Activated T-helper 2 cell treated with anti-CD3 and anti-CD28 coated beads, Interferon-gamma antibody, Interleukin-2, Interleukin-4, amounts not matched to agents 10 μg/mL and 5 μg/mL and 100 μg/mL, durations not matched to agents 14 hours and 24 hours and 36 hours (primary cell): ENCODE measurements at regions of chr2 and their contacts with region 1.

Region 1: GRCh38 chr2:191150600-191151330 is at the start of gene STAT4:
- DNase-seq: peak; percentile 76
- H3K4me3 Mint-ChIP-seq: peak within 1 kb of the TSS; percentile 95
- H3K27ac Mint-ChIP-seq: peak within 1 kb of the TSS; percentile 96
- H3K4me1 Mint-ChIP-seq: peaks cover 71% of the 10 kb centered on the region
- H3K27me3 Mint-ChIP-seq: no peaks in the 10 kb centered on the region
- total RNA-seq, gene STAT4: 92.2 and 96.9 TPM in 2 replicates

Region 2: DNA sequence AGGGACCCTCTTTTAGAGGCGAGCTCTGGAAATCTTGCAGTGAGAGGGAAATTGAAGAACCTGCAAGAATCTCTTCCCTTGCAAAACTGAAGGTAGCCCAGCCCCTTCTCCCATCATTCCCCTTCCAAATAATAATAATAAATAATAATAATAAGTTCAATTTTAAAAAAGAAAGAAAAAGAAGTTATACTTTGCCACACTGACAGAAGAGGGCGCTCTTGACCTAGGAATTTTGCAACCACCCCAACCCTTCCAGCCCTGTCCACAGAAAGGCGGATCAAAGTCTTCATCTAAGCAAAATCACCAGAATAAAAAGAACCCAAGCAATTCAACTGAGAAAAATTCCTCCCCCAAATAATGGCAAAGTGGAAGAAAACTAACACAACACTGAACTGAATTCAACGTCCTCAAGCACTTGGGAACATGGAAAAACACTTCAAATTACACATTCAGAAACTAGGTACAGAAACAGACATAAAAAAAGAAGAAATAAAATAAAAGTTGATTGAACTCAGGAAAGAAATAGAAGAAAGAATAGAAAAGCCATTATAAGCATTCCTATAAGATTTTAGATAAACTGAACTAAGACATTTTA is 369.1 kb before region 1 on chr2:
- intact Hi-C with region 1: loop called (anchors 5 kb)
- DNase-seq: peak; percentile 30
- H3K4me3 Mint-ChIP-seq: no peak overlapping the region
- H3K27ac Mint-ChIP-seq: no peak overlapping the region
- H3K4me1 Mint-ChIP-seq: peaks cover 39% of the 10 kb centered on the region
- H3K27me3 Mint-ChIP-seq: no peaks in the 10 kb centered on the region

Region 3: DNA sequence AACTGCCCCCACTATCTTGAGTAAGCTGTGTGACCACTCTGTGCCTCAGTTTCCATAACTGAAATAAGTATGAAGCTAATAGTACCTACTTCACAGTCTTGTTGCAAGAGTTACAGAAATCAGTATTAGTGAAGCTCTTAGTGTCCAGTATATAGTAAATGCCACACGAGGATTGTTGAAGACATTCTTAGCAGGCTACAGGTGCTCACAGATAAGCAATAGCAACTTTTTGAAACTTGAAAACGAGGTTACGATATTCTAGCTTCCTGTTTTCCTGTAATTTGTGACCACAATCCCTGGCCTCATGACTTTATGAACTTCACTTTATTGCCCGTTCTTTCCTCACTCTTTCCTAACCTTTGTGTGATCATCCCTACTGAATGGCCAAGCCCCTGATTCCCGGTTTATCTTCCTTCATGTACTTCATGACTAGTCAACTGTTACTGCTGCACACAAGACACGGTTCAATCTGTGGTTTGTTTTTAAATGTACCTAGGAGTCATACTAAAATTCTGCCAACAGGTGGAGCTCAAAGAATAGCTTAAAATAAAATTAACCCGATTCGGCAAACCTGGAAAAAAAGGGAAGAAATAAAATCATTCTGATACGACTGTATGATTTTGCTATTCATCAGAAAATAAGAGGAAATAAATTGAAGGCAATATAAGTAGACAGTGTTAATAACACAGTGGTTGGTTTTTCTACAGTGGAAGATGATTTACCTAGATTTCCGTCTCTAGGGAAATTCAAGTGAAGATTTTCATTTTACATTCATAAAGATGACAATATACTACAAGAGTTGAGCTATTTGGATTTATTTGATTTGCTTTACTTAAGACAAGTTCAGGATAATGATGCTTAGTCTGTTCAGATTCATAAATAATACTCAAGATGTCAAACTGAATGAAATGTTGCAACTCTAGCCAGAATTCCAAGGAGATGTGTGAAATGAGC is 98.7 kb before region 1 on chr2:
- intact Hi-C with region 1: loop called (anchors 1 kb)
- DNase-seq: no peak
- H3K4me3 Mint-ChIP-seq: no peak overlapping the region
- H3K27ac Mint-ChIP-seq: no peak overlapping the region
- H3K4me1 Mint-ChIP-seq: peaks cover 21% of the 10 kb centered on the region
- H3K27me3 Mint-ChIP-seq: no peaks in the 10 kb centered on the region

Region 4: DNA sequence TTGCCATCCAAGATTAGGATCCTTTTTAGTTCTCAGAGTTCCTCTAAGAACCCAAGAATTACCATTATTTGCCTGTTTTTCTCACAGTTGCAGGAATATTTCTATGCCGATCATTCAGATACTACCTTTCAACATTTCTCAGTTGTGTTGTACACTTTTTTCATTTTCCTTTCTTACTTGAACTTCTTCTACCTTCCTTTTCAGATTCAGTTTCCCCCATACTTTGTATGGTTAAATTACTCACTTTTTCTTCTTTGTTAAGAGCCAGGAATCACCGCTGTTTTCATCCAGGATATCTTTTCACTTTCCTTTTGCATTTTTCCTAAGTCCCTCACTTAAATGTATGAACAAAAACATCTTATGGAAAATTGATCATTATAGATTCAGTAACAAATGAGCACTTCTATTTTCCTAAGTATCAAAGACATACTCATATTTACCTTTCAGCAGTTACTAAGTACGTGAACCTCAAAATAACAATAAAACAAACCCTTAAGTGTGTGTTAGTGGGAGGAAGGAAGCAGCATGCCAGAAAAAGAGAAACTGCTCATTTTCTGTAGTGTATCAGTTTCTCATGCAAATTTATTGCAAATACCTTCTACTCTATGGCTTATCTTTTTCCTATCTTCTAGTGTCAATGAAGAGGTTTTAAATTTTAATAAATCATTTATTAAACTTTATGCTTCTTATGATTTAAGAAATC is 72.4 kb before region 1 on chr2:
- intact Hi-C with region 1: loop called (anchors 1 kb)
- DNase-seq: no peak
- H3K4me3 Mint-ChIP-seq: peak overlapping the region; percentile 74
- H3K27ac Mint-ChIP-seq: peak overlapping the region; percentile 85
- H3K4me1 Mint-ChIP-seq: peaks cover 42% of the 10 kb centered on the region
- H3K27me3 Mint-ChIP-seq: no peaks in the 10 kb centered on the region

Region 5: DNA sequence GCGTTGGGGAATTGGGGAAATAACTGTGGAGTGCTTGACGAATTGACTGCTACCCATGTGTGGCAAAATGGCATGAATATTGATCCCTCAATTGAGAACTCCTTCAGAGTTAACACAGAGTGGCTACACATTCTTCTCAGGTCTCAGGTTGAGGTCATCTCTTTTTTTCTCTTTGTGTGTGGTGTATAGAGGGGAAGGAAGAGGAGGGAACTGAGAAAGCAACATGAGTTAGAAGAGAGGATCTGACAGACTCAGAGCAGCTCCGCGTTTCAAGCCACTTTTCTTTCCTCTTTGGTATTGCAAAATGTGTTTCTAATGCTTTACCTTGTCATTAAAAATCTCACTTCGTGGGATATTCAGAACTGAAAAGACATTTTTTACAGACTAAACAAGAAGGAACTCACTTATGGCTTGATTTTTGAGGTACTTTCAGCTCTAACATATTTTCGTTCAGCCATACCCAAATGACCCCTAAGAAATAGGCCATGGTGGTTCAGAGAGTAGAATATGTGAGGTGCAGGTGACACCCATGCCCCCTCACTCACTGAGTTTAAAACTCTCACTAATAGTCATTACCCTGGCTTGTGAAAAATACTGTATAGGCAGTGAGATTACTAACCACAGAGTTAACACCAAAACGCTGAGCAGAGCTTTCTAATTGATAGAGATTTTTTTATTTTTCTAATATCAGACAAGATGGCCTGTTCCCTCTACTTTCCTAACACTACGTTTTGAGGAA is 22.4 kb before region 1 on chr2:
- intact Hi-C with region 1: loop called (anchors 1 kb)
- DNase-seq: no peak
- H3K4me3 Mint-ChIP-seq: no peak overlapping the region
- H3K27ac Mint-ChIP-seq: peak overlapping the region; percentile 71
- H3K4me1 Mint-ChIP-seq: peaks cover 62% of the 10 kb centered on the region
- H3K27me3 Mint-ChIP-seq: no peaks in the 10 kb centered on the region

Region 6: GRCh38 chr2:191165176-191165643 is 14.4 kb after region 1 on chr2:
- intact Hi-C with region 1: no loop called
- DNase-seq: no peak
- H3K4me3 Mint-ChIP-seq: no peak overlapping the region
- H3K27ac Mint-ChIP-seq: no peak overlapping the region
- H3K4me1 Mint-ChIP-seq: peaks cover 23% of the 10 kb centered on the region
- H3K27me3 Mint-ChIP-seq: peaks cover 12% of the 10 kb centered on the region